Endothelial cell of umbilical vein (primary cell): ENCODE measurements at regions of chr16 and their contacts with region 1.

Region 1: GRCh38 chr16:82061861-82062525 is 26.9 kb downstream of the HSD17B2 start:
- DNase-seq: peak; percentile 55
- H3K4me3 ChIP-seq: no peak overlapping the region
- H3K27ac ChIP-seq: no peak overlapping the region
- H3K4me1 ChIP-seq: no peaks in the 10 kb centered on the region
- H3K27me3 ChIP-seq: peaks cover 11 to 20% of the 10 kb centered on the region in 2 experiments
- CTCF ChIP-seq: peak; percentile 51 to 59
- POLR2A ChIP-seq: no peak

Region 2: GRCh38 chr16:81885976-81886586 is 175.9 kb before region 1 on chr16:
- CTCF ChIA-PET with region 1: interaction called, 24 read pairs
- POLR2A ChIA-PET with region 1: no interaction called
- dilution Hi-C with region 1: no loop called
- intact Hi-C with region 1: loop called (anchors 1 kb)
- DNase-seq: peak; percentile 40
- H3K4me3 ChIP-seq: no peak overlapping the region
- H3K27ac ChIP-seq: no peak overlapping the region
- H3K4me1 ChIP-seq: no peaks in the 10 kb centered on the region
- H3K27me3 ChIP-seq: no peaks in the 10 kb centered on the region
- CTCF ChIP-seq: peak; percentile 73 to 78
- POLR2A ChIP-seq: no peak

Region 3: GRCh38 chr16:82016263-82016662 is 45.7 kb before region 1 on chr16:
- CTCF ChIA-PET with region 1: interaction called, 12 read pairs
- POLR2A ChIA-PET with region 1: no interaction called
- dilution Hi-C with region 1: no loop called
- intact Hi-C with region 1: loop called (anchors 5 kb)
- DNase-seq: peak; percentile 90
- H3K4me3 ChIP-seq: peak overlapping the region in 1 of 3 experiments; percentile 45
- H3K27ac ChIP-seq: no peak overlapping the region
- H3K4me1 ChIP-seq: peaks cover 9% of the 10 kb centered on the region
- H3K27me3 ChIP-seq: peaks cover 4 to 15% of the 10 kb centered on the region in 2 experiments
- CTCF ChIP-seq: peak; percentile 52 to 58
- POLR2A ChIP-seq: no peak

Region 4: DNA sequence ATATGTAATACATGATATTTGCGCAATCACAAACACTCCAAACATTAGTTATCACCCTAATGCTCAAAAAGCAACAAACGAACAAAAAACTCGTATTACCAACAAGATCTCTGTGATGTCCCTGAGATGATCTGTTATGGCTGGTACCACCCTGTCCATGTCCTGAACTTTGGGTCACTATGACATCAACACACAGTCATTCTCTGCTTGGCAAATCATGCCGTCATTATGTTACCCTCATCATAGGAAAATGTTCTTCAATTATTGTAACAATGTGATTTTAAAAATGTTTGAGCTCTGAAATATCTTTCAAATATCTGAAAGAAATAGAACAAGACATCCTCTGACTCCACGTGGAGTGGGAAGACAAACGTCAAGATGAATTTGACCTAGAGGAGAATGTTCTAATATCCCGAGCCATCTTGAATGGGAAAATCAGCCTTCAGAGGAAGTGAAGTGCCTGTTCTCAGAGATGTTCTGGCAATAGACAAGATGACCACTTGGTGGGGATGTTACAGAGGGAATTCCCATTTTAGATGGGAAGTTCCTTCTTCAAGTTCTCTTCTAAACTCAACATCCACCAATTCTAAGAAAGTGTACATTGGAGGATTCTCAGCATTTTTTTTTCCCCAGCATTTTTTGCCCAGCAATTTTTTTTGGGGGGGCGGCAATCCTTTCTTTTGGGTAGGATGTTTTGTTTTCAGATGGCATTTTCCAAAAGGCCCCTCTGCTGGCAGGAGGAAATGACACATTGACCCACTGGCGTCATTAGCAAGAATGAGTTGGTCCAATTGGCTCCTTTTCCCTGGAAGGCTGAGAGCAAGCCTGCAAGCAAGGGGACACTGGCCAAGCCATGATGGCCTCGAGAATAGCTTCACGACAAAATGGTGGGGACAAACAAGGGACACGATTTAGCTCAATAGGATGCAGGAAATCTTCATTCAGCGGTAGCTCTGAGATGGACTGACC is 30.6 kb before region 1 on chr16:
- CTCF ChIA-PET with region 1: interaction called, 16 read pairs
- POLR2A ChIA-PET with region 1: no interaction called
- dilution Hi-C with region 1: no loop called
- intact Hi-C with region 1: loop called (anchors 2 kb)
- DNase-seq: peak; percentile 44
- H3K4me3 ChIP-seq: no peak overlapping the region
- H3K27ac ChIP-seq: peak overlapping the region; percentile 1
- H3K4me1 ChIP-seq: peaks cover 32% of the 10 kb centered on the region
- H3K27me3 ChIP-seq: peaks cover 0 to under 1% of the 10 kb centered on the region in 2 experiments
- CTCF ChIP-seq: peak; percentile 28 to 33
- POLR2A ChIP-seq: no peak

Region 5: DNA sequence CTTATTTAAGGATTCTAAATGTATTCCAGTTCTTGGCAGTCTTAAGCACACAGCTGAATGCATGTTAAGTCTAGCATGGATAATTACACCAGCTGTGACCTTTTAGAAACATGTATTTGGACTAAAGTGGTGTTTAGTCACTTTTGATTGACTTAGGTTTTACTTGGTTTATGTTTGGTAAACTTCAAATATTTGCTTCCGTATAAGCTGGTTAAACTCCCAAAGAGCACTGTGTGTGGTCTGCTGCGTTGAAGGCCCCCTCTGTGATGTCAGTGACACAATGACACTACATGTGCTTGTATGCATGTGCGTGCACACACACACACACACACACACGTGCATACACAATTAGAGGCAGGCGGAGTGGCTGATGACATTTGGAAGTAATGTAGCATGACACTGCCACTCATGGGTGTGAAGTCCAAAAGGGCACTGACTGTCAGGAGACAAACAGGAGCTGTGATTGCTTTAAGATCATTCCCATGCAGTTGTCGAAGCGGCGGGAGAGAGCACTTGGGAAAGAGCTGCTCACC is 408.7 kb after region 1 on chr16:
- CTCF ChIA-PET with region 1: no interaction called
- POLR2A ChIA-PET with region 1: no interaction called
- dilution Hi-C with region 1: no loop called
- intact Hi-C with region 1: no loop called
- DNase-seq: no peak
- H3K4me3 ChIP-seq: no peak overlapping the region
- H3K27ac ChIP-seq: no peak overlapping the region
- H3K4me1 ChIP-seq: no peaks in the 10 kb centered on the region
- H3K27me3 ChIP-seq: peaks cover 0 to 3% of the 10 kb centered on the region in 2 experiments
- CTCF ChIP-seq: no peak
- POLR2A ChIP-seq: no peak